Activated T-helper 1 cell treated with anti-CD3 and anti-CD28 coated beads, Interleukin-12 subunit alpha, Interleukin-12 subunit beta, Interleukin-2, Interleukin-4 antibody, amounts not matched to agents 30 ng/mL and 10 ng/mL and 1 ng/mL, durations not matched to agents 14 hours and 24 hours and 36 hours (primary cell): ENCODE measurements at regions of chr20 and their contacts with region 1.

Region 1: GRCh38 chr20:18412221-18412901 is 54.5 kb downstream of the DZANK1 start:
- DNase-seq: no peak
- H3K4me3 Mint-ChIP-seq: no peak overlapping the region
- H3K27ac Mint-ChIP-seq: no peak overlapping the region
- H3K4me1 Mint-ChIP-seq: peaks cover 6% of the 10 kb centered on the region
- H3K27me3 Mint-ChIP-seq: no peaks in the 10 kb centered on the region

Region 2: DNA sequence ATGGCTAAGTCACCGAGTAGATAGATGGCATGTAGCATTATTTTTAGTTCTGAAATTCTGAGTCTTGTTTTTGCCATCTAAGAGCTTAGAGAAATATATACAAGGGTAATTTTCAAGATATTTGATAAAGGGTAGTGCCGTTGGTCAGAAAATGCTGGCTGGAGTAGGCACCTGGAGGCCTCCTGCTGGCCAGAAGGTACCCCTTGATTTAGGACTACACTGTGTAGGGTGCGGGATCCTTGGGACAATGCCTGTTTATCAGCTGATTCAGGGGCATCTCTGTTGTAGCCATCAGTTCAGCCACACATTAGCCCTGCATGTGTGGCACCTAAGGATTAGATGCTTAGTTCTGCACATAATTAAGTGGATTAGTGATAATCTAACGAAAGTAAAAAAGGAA is 262.1 kb before region 1 on chr20:
- intact Hi-C with region 1: no loop called
- DNase-seq: no peak
- H3K4me3 Mint-ChIP-seq: no peak overlapping the region
- H3K27ac Mint-ChIP-seq: no peak overlapping the region
- H3K4me1 Mint-ChIP-seq: no peaks in the 10 kb centered on the region
- H3K27me3 Mint-ChIP-seq: no peaks in the 10 kb centered on the region

Region 3: DNA sequence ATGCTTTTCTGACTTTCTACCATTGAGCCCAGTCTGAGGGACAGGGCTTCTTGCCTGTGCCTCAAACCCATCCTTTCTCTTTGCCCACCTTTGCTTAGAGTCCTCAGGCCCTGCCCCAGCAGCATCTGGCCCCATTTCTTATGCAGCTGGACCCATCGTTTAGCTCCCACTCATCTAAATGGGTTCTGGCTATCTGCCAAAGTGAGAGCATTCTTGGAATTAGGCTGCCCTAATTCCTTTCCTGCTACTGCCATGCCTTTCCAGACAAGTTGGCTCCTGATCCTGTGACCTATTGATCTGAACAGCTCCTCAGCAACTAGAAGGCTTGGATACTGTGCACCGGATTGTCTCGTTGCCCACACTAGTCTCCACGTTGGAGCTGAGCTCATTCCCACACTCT is 31.5 kb after region 1 on chr20:
- intact Hi-C with region 1: no loop called
- DNase-seq: no peak
- H3K4me3 Mint-ChIP-seq: no peak overlapping the region
- H3K27ac Mint-ChIP-seq: no peak overlapping the region
- H3K4me1 Mint-ChIP-seq: no peaks in the 10 kb centered on the region
- H3K27me3 Mint-ChIP-seq: peaks cover 2% of the 10 kb centered on the region

Region 4: DNA sequence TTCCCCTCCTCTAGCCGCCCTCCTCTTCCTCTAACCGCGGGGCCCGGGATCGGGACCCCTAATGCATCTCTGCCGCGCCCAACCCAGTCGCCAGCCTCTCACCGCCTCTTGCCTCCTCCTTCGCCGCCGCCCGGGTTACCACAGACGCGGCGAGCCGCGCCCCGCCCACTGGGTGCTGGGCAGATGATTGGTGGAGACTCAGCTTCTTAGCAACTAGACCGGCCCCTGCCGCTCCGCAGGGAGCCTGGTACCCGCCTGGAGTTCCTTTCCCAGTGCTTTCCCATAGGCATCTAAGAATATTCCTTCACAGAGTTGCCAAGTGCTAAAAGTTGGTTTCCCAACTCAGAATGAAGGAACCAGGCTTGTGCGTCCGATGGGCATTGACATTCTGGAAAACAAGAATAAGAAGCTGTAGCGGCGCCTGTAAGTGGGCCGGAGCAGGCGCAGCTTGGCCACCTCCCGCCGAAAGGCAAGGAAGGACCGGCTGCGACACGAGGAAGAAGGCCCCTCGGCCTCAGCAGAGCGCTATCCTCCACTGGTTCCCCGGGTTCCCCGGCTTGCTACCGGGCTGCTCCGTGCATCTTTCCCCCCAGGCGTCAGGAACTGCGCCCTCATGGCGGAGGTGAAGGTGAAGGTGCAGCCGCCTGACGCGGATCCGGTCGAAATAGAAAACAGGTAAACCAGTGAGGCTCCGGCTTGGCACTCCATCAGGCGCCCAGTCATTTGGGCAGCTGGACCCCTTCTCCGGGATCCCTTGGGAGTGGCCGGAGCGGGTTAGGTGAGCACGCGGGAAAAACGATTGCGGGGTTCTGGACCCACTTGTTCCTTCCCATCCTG is 54.8 kb after region 1 on chr20 and contains the starts of genes DZANK1 and POLR3F:
- intact Hi-C with region 1: loop called (anchors 1 kb)
- DNase-seq: peak; percentile 90
- H3K4me3 Mint-ChIP-seq: peak within 1 kb of the TSS; percentile 99
- H3K27ac Mint-ChIP-seq: peak within 1 kb of the TSS; percentile 92
- H3K4me1 Mint-ChIP-seq: peaks cover 31% of the 10 kb centered on the region
- H3K27me3 Mint-ChIP-seq: no peaks in the 10 kb centered on the region
- total RNA-seq, gene DZANK1: 1.1 and 1.8 TPM in 2 replicates
- total RNA-seq, gene POLR3F: 13.4 and 16.6 TPM in 2 replicates

Region 5: DNA sequence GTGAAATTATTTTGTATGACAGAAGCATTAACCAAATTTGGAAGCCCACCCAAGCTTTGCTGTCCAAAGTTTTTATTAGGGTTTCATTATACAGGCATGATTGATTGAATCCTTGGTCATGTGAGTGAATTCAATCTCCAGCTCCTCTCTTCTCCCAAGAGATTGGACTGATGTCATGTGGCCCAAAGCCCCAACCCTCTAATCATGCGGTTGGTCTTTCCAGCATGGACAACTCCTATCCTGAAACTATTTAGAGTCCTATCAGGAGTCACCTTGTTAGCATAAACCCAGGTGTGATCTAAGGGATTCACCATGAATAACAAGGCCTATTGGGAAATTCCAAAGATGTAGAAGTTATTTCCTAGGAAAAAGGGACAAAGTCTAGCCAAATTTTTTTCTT is 65.5 kb after region 1 on chr20:
- intact Hi-C with region 1: no loop called
- DNase-seq: no peak
- H3K4me3 Mint-ChIP-seq: no peak overlapping the region
- H3K27ac Mint-ChIP-seq: no peak overlapping the region
- H3K4me1 Mint-ChIP-seq: no peaks in the 10 kb centered on the region
- H3K27me3 Mint-ChIP-seq: no peaks in the 10 kb centered on the region

Region 6: DNA sequence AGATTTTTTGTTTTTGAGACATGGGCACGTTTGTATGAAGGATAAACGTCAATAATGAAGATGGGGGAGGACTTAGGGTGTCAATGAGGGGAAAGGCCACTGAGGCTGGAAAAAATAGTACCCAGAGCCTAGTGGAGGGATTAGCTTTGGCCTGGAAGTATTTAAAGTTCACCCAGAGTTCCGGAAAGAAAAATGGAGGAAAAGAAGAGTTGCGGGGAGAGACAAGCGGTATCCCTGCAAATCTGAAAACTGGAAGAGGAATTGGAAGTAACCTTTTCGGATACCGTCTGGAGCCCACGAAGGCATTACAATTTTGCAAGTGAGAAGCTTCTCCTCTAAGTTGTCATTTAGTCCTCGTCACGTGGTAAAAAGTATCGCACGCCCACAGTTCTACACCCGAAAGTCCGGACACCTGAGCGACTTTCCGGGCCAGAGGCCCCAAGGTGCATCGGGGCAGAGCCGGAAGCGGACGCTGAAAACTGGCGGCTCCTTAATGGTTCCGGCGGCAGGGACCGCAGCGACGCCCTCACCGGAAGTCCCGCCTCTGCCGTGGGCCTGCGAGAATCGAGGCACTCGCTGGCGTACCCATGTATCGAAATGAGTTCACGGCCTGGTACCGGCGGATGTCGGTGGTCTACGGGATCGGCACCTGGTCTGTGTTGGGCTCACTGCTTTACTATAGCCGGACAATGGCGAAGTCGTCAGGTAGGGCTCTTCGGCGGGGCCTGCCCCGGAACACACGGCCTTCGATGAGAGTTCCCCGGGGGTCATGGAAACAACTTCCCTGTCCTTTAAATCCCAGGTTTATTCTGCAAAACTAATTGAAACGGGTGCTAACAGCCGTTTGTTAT is 154.8 kb after region 1 on chr20 and contains the start of gene SMIM26:
- intact Hi-C with region 1: loop called (anchors 2 kb)
- DNase-seq: peak; percentile 91
- H3K4me3 Mint-ChIP-seq: peak within 1 kb of the TSS; percentile 95
- H3K27ac Mint-ChIP-seq: peak within 1 kb of the TSS; percentile 95
- H3K4me1 Mint-ChIP-seq: peaks cover 10% of the 10 kb centered on the region
- H3K27me3 Mint-ChIP-seq: no peaks in the 10 kb centered on the region
- total RNA-seq, gene SMIM26: 54.9 and 57.9 TPM in 2 replicates

Region 7: DNA sequence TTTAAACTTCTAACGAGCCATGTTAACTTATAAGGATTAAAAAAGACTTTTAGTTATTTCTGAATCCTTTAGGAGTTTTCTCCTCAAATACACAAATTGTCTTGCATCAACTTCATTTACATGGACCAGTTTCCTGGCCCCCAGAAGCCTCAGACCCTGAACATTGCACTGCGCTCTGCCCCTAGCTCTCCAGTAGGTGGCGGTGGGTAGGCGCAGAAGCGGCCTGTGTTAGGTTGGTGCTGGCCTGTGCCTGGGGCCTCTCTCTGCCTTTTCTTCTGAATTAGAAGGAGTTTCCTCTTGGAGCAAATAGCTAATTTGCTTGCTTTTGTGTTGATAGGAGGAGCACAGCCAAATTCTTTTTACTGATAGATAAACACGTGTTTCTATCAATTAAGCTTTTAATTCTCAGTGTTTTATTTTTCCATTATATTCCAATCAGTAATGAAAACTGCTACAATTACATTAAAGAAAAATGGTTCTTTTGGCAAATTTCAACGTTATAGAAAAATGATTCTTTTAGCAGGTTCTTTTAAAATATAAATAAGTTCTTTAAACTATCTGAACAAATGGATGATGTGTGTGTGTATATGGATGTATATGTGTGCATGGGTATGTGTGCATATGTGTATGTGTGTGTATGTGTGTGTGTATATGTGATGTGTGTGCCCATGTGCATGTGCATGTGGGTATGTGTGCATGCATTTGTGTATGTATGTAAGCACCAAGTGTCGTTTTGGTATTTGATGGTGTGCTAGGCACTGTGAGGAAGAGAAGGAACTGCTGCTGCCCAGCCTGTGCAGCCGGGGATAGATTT is 220.0 kb after region 1 on chr20:
- intact Hi-C with region 1: loop called (anchors 5 kb)
- DNase-seq: peak; percentile 19
- H3K4me3 Mint-ChIP-seq: no peak overlapping the region
- H3K27ac Mint-ChIP-seq: no peak overlapping the region
- H3K4me1 Mint-ChIP-seq: no peaks in the 10 kb centered on the region
- H3K27me3 Mint-ChIP-seq: no peaks in the 10 kb centered on the region

Region 8: DNA sequence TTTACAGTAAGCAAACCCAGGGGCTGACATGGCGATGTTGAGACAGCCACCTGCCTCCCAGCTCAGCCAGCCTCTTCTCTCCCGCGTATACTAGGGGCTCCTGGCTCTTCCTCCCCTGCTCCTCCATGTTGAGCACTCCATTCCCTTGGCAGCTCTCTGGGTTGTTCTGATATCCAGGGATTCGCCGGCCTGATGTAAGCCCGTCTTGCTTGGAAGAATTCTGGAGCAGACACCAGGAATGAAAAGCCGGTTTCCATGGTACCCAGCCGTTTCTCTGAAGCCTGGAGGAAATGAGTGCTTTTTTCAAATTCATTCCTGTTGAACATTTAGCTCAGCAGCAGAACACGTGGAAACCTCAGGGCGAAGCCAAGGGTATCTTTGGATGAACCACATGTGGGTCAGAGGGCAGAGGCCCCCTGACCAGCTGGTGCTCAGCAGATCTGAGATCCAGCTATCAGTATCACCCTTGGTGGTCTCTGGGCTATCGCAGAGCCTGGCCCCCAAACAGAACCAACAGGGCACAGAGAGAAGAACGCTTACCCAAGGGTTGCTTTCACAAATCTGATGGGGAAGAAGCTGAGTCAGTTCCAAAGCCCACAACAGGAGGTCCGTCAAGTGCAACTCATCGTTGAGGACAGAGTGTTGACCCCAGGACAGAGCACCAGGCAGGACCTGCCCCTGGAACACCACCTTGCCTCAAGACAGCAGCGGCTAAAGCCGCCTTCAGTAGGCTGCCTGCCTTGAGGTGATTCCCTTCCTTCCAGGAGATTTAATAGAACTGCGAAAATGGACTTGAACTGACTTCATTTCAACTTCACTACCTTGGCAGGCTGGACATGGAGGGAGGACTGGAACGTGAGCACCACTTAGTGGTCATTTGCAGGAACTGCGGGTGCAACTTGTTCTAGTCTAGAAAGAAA is 1249.6 kb after region 1 on chr20:
- intact Hi-C with region 1: loop called (anchors 1 kb)
- DNase-seq: peak; percentile 11
- H3K4me3 Mint-ChIP-seq: no peak overlapping the region
- H3K27ac Mint-ChIP-seq: no peak overlapping the region
- H3K4me1 Mint-ChIP-seq: no peaks in the 10 kb centered on the region
- H3K27me3 Mint-ChIP-seq: peaks cover 3% of the 10 kb centered on the region